B cell (primary cell): ENCODE measurements at regions of chr2 and their contacts with region 1.

Region 1: GRCh38 chr2:126527836-126528507 is 128.0 kb upstream of the GYPC start:
- DNase-seq: peak; percentile 72
- ATAC-seq: no peak
- H3K4me3 ChIP-seq: no peak overlapping the region
- H3K4me3 Mint-ChIP-seq: no peak overlapping the region
- H3K27ac ChIP-seq: no peak overlapping the region
- H3K27ac Mint-ChIP-seq: no peak overlapping the region
- H3K4me1 ChIP-seq: no peaks in the 10 kb centered on the region
- H3K4me1 Mint-ChIP-seq: no peaks in the 10 kb centered on the region
- H3K27me3 ChIP-seq: no peaks in the 10 kb centered on the region
- H3K27me3 Mint-ChIP-seq: no peaks in the 10 kb centered on the region
- CTCF ChIP-seq: peak; percentile 79

Region 2: DNA sequence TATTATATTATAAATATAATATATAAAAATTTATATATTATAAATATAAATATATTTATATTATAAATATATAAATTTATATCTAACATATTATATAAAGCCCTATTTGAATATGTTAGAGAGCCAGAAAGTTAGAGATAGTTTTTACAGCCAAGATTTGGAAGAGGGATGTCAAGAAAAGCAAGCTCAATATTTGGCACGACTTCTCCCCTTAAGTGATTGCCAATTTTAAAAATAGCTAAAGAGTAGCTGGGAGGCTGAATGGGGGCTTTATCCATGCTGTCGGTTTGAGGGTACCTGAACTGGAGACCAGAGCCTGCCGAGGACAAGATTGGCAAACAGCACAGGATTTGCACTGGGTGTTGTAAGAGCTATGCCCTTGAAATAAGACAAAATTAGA is 52.9 kb before region 1 on chr2:
- CTCF ChIA-PET with region 1: no interaction called
- POLR2A ChIA-PET with region 1: no interaction called
- intact Hi-C with region 1: no loop called
- DNase-seq: no peak
- ATAC-seq: no peak
- H3K4me3 ChIP-seq: no peak overlapping the region
- H3K4me3 Mint-ChIP-seq: no peak overlapping the region
- H3K27ac ChIP-seq: no peak overlapping the region
- H3K27ac Mint-ChIP-seq: no peak overlapping the region
- H3K4me1 ChIP-seq: no peaks in the 10 kb centered on the region
- H3K4me1 Mint-ChIP-seq: no peaks in the 10 kb centered on the region
- H3K27me3 ChIP-seq: no peaks in the 10 kb centered on the region
- H3K27me3 Mint-ChIP-seq: peaks cover 6% of the 10 kb centered on the region
- CTCF ChIP-seq: no peak

Region 3: GRCh38 chr2:126749537-126749936 is 221.6 kb after region 1 on chr2:
- CTCF ChIA-PET with region 1: interaction called, 34 read pairs
- POLR2A ChIA-PET with region 1: no interaction called
- intact Hi-C with region 1: loop called (anchors 1 kb)
- DNase-seq: peak; percentile 23
- ATAC-seq: no peak
- H3K4me3 ChIP-seq: no peak overlapping the region
- H3K4me3 Mint-ChIP-seq: no peak overlapping the region
- H3K27ac ChIP-seq: no peak overlapping the region
- H3K27ac Mint-ChIP-seq: no peak overlapping the region
- H3K4me1 ChIP-seq: no peaks in the 10 kb centered on the region
- H3K4me1 Mint-ChIP-seq: no peaks in the 10 kb centered on the region
- H3K27me3 ChIP-seq: peaks cover 0 to 12% (median 0%) of the 10 kb centered on the region in 4 experiments
- H3K27me3 Mint-ChIP-seq: peaks cover 6% of the 10 kb centered on the region
- CTCF ChIP-seq: peak; percentile 34

Region 4: DNA sequence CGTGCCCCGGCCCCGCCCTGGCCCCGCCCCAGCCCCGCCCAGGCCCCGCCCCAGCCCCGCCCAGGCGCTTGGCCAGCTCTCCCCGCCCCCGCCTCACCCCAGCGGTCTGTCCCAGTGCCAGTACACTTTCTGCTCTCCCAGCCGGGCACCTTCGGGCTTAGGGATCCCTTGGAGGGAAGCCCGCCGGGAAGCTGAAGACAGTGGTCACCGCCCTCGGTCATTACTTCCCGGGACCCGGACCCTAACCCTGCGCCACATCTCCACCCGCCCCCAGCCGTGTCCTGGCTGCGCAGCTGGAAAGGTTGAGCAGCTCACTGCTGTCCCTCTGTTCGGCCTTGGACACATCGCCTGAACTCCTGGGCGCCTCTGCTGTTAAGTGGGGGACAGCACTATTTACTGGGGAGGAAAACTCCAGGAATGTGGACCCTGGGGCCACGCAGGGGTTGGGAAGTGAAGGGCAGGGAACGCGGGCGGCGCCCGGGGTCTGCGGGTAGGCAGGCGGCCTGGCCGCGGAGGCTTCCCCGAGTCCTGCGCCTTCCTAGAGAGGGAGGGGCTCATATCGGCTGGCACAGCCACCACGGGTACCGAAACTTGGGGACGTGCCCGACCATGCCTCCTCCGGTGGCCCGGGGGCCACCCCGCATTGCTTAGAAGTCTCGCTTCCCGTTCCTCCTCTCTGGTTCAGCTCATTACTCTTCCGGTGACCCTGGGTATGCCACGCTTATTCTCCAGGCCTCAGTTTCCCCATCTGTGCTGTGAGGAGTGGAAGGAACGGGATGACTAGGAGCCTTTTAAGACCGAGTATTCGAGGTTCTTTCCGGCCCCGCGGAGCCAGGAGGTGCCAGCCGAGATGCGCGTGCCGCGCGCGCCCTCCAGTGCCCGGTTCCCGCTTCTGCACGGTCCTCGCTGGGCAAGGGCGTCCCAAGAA is 249.0 kb after region 1 on chr2:
- CTCF ChIA-PET with region 1: interaction called, 116 read pairs
- POLR2A ChIA-PET with region 1: no interaction called
- intact Hi-C with region 1: no loop called
- DNase-seq: peak; percentile 77
- ATAC-seq: peak; percentile 77
- H3K4me3 ChIP-seq: peak overlapping the region; percentile 17 to 66 (median 56)
- H3K4me3 Mint-ChIP-seq: peak overlapping the region; percentile 97
- H3K27ac ChIP-seq: peak overlapping the region in 1 of 2 donors; percentile 21
- H3K27ac Mint-ChIP-seq: peak overlapping the region; percentile 7
- H3K4me1 ChIP-seq: peaks cover 3 to 10% of the 10 kb centered on the region in 2 donors
- H3K4me1 Mint-ChIP-seq: peaks cover 9% of the 10 kb centered on the region
- H3K27me3 ChIP-seq: peaks cover 0 to 10% (median 0%) of the 10 kb centered on the region in 4 experiments
- H3K27me3 Mint-ChIP-seq: peaks cover 36% of the 10 kb centered on the region
- CTCF ChIP-seq: peak; percentile 91

Region 5: GRCh38 chr2:126971481-126972278 is 443.7 kb after region 1 on chr2:
- CTCF ChIA-PET with region 1: interaction called, 38 read pairs
- POLR2A ChIA-PET with region 1: no interaction called
- intact Hi-C with region 1: no loop called
- DNase-seq: peak; percentile 73
- ATAC-seq: peak; percentile 91
- H3K4me3 ChIP-seq: peak overlapping the region in 4 of 5 experiments; percentile 28 to 56 (median 42)
- H3K4me3 Mint-ChIP-seq: peak overlapping the region; percentile 79
- H3K27ac ChIP-seq: no peak overlapping the region
- H3K27ac Mint-ChIP-seq: no peak overlapping the region
- H3K4me1 ChIP-seq: peaks cover 4 to 11% of the 10 kb centered on the region in 2 donors
- H3K4me1 Mint-ChIP-seq: peaks cover 5% of the 10 kb centered on the region
- H3K27me3 ChIP-seq: peaks cover 0 to 38% (median 13%) of the 10 kb centered on the region in 4 experiments
- H3K27me3 Mint-ChIP-seq: peaks cover 50% of the 10 kb centered on the region
- CTCF ChIP-seq: peak; percentile 99